IMR-90 (cell line): ENCODE measurements at regions of chr6 and their contacts with region 1.

Region 1: GRCh38 chr6:20909621-20910020 is 375.4 kb downstream of the CDKAL1 start:
- DNase-seq: no peak
- ATAC-seq: no peak
- H3K4me3 ChIP-seq: no peak overlapping the region
- H3K27ac ChIP-seq: no peak overlapping the region
- H3K4me1 ChIP-seq: peaks cover 4% of the 10 kb centered on the region
- H3K27me3 ChIP-seq: no peaks in the 10 kb centered on the region
- CTCF ChIP-seq: no peak
- POLR2A ChIP-seq: no peak
- RAD21 ChIP-seq: no peak

Region 2: GRCh38 chr6:21426832-21427490 is 517.3 kb after region 1 on chr6:
- CTCF ChIA-PET with region 1: no interaction called
- POLR2A ChIA-PET with region 1: no interaction called
- dilution Hi-C with region 1: no loop called
- in situ Hi-C with region 1: no loop called
- intact Hi-C with region 1: loop called (anchors 5 kb)
- DNase-seq: no peak
- ATAC-seq: no peak
- H3K4me3 ChIP-seq: no peak overlapping the region
- H3K27ac ChIP-seq: no peak overlapping the region
- H3K4me1 ChIP-seq: no peaks in the 10 kb centered on the region
- H3K27me3 ChIP-seq: no peaks in the 10 kb centered on the region
- CTCF ChIP-seq: no peak
- POLR2A ChIP-seq: no peak
- RAD21 ChIP-seq: no peak